ENCODE measurements at regions of chr10 and their contacts with region 1.

Region 1: GRCh38 chr10:123994417-123995081 is 98.8 kb downstream of the CHST15 start:
- DNase-seq: peak; percentile 71 to 98 (median 90)
- ATAC-seq: peak; percentile 90
- H3K4me3 ChIP-seq: peak overlapping the region; percentile 10 to 26
- H3K27ac ChIP-seq: peak overlapping the region in 1 of 2 donors; percentile 92
- H3K4me1 ChIP-seq: peaks cover 16 to 58% of the 10 kb centered on the region in 2 donors
- H3K27me3 ChIP-seq: peaks cover 45 to 60% of the 10 kb centered on the region in 2 donors
- CTCF ChIP-seq: peak; percentile 100

Region 2: DNA sequence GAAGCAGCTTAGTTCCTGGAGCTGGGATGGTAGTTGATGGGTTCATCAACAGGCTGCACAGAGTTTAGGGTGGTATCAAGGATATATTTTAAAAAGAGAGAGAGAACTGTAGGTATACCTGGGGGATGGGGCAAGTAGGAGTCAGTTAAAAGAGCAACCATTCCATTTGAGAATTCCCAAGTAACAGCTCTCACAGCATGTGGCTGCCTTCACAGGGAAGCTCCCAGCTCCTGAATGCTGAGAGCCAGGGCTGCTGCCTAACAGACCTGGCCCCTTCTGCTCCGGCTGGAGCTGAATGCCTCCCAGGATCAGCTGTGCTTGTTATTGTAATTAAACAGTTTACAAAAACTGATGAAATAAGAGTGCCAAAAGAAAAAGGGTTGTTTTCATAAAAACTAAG is 387.2 kb before region 1 on chr10:
- intact Hi-C with region 1: no loop called
- DNase-seq: no peak
- ATAC-seq: no peak
- H3K4me3 ChIP-seq: no peak overlapping the region
- H3K27ac ChIP-seq: no peak overlapping the region
- H3K4me1 ChIP-seq: no peaks in the 10 kb centered on the region
- H3K27me3 ChIP-seq: peaks cover 0 to 42% of the 10 kb centered on the region in 2 donors
- CTCF ChIP-seq: no peak

Region 3: GRCh38 chr10:123782026-123782425 is 212.5 kb before region 1 on chr10:
- intact Hi-C with region 1: no loop called
- DNase-seq: peak in 1 of 4 donors; percentile 7
- ATAC-seq: no peak
- H3K4me3 ChIP-seq: no peak overlapping the region
- H3K27ac ChIP-seq: no peak overlapping the region
- H3K4me1 ChIP-seq: no peaks in the 10 kb centered on the region
- H3K27me3 ChIP-seq: peaks cover 0 to 39% of the 10 kb centered on the region in 2 donors
- CTCF ChIP-seq: no peak

Region 4: GRCh38 chr10:124259139-124259825 is 264.7 kb after region 1 on chr10:
- intact Hi-C with region 1: loop called in 1 of 2 experiments (anchors 5 kb)
- DNase-seq: peak in 1 of 4 donors; percentile 61
- ATAC-seq: peak; percentile 49
- H3K4me3 ChIP-seq: no peak overlapping the region
- H3K27ac ChIP-seq: no peak overlapping the region
- H3K4me1 ChIP-seq: no peaks in the 10 kb centered on the region
- H3K27me3 ChIP-seq: no peaks in the 10 kb centered on the region
- CTCF ChIP-seq: peak in 1 of 2 donors; percentile 27

Measured in left lung (tissue), 14 donors.